ENCODE measurements at regions of chr17 and their contacts with region 1.

Region 1: DNA sequence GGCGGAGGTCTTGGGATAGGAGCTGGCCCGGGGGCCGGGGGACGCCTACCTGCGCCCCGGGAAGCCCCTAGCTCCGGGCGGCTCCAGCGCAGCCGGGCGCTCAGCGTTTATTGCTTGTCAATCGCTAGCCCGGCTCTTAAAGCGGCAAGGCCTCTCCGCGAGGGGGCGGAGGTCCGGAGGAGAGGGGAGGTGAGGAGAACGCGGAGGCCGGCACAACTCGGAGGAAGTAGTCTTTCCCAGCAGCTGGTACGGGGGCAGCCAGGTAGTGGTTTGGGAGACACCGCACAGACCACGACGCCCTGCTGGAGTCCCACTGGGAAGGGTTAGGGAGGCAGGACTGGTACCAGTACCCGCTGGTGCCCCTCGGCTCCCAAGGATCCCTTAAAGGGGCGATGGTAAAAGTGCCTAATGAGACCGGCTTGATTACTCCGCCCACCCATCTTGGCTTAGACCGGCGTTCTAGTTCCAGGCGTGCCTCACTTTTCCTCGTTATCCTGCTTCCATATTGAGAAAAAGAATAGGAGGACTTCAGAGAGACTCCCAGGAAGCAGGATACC is at the start of gene MPP2:
- DNase-seq: peak; percentile 88
- ATAC-seq: peak; percentile 16
- H3K4me3 Mint-ChIP-seq: peak within 1 kb of the TSS; percentile 90
- H3K27ac Mint-ChIP-seq: no peak within 1 kb of the TSS
- H3K4me1 Mint-ChIP-seq: peaks cover 26% of the 10 kb centered on the region
- H3K27me3 Mint-ChIP-seq: peaks cover 49% of the 10 kb centered on the region
- CTCF ChIP-seq: no peak
- total RNA-seq, gene MPP2: 29.3 to 31.4 TPM (median 29.9 TPM) in 3 replicates

Region 2: DNA sequence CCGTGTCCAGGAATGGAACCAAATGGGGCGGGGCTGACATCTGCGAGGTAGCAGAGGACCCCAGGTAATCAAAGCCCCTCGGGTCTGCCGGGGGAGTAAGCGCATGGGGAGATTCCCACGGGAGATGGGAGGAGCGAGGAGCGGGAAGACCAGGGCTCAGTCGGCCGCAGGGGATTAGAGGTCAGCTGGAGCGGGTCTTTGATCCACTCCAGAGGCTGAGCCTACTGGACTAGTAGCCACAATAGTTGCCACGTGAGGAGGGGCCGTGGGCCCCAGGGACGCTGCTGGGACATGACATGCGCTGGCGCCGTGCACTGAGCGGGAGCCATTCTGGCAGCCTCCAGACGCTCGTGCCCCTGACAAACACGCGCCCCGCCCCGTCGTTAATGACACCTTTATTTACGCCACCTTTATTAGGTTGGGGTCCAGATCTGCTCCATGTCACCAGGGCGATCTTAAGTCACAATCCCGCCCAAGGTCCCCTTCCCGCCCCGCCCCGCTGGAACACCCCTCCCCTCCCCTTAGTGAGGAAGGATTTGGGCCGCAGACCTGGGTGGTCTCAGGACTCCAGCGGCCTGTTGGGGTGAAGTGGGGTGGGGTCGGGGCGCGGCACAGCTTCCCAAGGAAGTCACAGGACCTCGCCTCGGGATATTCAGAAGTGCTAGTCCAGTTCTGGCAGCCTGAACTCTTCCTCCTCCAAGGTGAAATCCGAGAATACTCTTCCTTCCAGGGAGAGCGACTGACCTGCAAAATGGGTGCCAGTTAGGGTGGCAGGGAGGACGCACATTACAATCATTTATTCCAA is 19.8 kb after region 1 on chr17:
- CTCF ChIA-PET with region 1: interaction called, 13 read pairs
- POLR2A ChIA-PET with region 1: no interaction called
- DNase-seq: no peak
- ATAC-seq: no peak; the same call in 1 of the 2 replicates
- H3K4me3 Mint-ChIP-seq: peak overlapping the region; percentile 78
- H3K27ac Mint-ChIP-seq: no peak overlapping the region
- H3K4me1 Mint-ChIP-seq: peaks cover 12% of the 10 kb centered on the region
- H3K27me3 Mint-ChIP-seq: peaks cover 65% of the 10 kb centered on the region
- CTCF ChIP-seq: no peak

Region 3: DNA sequence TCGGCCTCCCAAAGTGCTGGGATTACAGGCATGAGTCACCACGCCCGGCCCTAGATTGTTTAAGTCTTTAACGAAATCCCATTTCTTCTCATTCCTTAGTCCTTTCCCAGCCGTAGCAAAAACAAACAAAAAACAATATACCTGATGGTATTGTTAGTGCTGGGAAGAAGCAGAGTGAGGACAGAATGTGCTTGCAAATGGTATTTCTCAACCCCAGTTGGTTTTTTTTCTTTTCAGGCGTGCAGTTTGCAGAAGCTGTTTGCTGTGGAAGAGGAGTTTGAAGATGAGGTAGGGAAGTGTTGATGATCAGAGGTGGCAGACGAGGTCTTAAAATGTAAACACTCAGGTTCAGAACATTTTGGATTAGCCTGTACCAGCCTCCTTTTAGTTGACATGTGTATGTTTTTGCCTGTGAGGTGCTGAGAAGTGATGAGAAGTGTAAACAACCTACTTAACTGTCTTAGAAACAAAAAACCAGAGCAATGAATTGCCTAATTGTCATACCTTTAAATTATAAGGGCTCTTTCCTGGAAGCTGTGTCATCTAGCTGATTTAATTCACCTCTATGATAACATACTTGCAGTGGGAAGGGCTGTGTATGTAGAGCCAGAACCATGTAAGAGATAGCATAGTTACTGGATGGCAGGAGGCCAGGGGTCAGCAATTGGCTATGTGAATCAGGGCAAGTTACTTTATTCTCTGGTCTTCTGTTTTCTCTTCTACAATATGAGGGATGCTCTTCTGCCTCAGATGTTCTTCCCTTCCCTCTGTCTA is 237.7 kb after region 1 on chr17:
- CTCF ChIA-PET with region 1: no interaction called
- POLR2A ChIA-PET with region 1: no interaction called
- DNase-seq: no peak
- ATAC-seq: no peak
- H3K4me3 Mint-ChIP-seq: no peak overlapping the region
- H3K27ac Mint-ChIP-seq: no peak overlapping the region; the same call in 1 of the 2 replicates
- H3K4me1 Mint-ChIP-seq: peaks cover 5% of the 10 kb centered on the region; the same call in 1 of the 2 replicates
- H3K27me3 Mint-ChIP-seq: no peaks in the 10 kb centered on the region
- CTCF ChIP-seq: no peak